Transverse colon (tissue), 4 donors: ENCODE measurements at regions of chr3 and their contacts with region 1.

Region 1: DNA sequence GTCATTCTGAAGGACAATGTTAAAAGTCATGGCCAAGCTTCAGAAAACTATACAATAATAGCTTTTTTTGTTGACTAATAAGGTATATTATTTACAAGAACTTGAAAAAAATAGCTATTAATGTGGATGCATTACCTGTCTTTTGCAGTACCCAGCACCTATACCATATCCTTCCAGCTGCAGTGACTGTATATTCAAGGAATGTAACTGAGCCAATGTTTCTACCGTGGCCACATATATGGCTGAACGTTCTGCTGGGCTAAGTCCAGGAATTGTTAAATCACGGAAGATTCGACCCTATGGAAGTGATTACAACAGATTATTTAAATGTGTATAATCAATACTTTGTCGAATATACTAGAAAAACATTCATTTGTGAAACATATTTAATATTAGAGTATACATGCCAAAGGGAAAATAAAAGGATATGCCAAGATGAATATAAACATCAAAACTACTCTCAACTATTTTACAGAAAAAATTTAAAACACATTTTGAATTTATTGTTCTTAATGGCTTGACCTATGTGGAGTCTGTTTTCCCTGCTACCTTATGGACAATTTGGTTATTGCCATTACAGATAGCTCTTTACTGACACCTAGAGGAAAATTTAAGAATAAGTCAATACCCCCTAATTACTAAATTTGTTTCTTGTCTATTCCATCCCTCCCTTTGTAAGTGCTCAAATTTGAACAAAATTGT is 17.6 kb downstream of the ACAD11 start:
- DNase-seq: no peak
- H3K4me3 ChIP-seq: no peak overlapping the region
- H3K27ac ChIP-seq: no peak overlapping the region
- H3K4me1 ChIP-seq: no peaks in the 10 kb centered on the region
- H3K27me3 ChIP-seq: no peaks in the 10 kb centered on the region
- CTCF ChIP-seq: peak; percentile 74 to 89 (median 77)
- EP300 ChIP-seq: no peak
- POLR2A ChIP-seq: no peak

Region 2: GRCh38 chr3:132352541-132353143 is 289.3 kb before region 1 on chr3:
- in situ Hi-C with region 1: loop called in 2 of 4 experiments (anchors 25 kb)
- intact Hi-C with region 1: no loop called
- DNase-seq: peak; percentile 70
- H3K4me3 ChIP-seq: no peak overlapping the region
- H3K27ac ChIP-seq: no peak overlapping the region
- H3K4me1 ChIP-seq: no peaks in the 10 kb centered on the region
- H3K27me3 ChIP-seq: no peaks in the 10 kb centered on the region
- CTCF ChIP-seq: peak; percentile 83 to 93 (median 87)
- EP300 ChIP-seq: no peak
- POLR2A ChIP-seq: no peak

Region 3: GRCh38 chr3:132535575-132536441 is 106.2 kb before region 1 on chr3:
- in situ Hi-C with region 1: loop called (anchors 5 to 10 kb)
- intact Hi-C with region 1: loop called (anchors 5 kb)
- DNase-seq: peak; percentile 52
- H3K4me3 ChIP-seq: no peak overlapping the region
- H3K27ac ChIP-seq: no peak overlapping the region
- H3K4me1 ChIP-seq: no peaks in the 10 kb centered on the region
- H3K27me3 ChIP-seq: no peaks in the 10 kb centered on the region
- CTCF ChIP-seq: peak; percentile 56 to 74 (median 64)
- EP300 ChIP-seq: no peak
- POLR2A ChIP-seq: no peak

Region 4: DNA sequence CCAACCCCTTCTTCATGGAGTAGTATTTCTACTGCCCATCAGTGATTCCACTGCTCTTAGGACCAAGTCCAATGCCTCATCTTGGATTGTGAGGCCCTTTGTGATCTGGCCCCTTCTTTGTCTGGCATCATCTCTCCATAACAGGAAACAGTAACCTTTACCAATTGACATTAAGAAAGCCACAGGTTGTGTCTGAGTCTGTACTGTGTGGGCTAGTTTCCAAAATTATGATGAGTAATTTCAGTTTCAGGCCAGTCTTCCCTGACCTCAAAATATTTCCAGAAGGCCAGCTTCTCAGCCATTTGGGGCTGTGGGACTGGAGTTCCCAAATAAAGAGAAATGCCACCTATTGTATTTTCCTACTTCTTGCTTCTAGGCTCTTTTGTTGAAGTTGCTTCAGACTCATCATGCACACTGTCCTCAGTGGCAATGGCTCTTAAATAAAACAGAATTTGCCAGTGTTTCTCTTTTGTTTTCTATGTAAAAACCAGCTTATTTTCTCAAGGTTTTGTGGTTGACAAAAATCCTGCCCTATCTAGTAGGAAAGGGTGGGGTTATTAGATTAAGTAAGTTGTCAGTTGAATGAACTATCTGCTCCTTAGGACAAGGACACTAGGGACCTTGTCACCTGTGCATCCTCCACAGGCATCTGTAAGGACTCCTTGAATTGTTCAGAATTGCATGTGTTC is 92.0 kb before region 1 on chr3:
- in situ Hi-C with region 1: loop called in 1 of 4 experiments (anchors 10 kb)
- intact Hi-C with region 1: no loop called
- DNase-seq: no peak
- H3K4me3 ChIP-seq: no peak overlapping the region
- H3K27ac ChIP-seq: no peak overlapping the region
- H3K4me1 ChIP-seq: peaks cover 0 to 7% (median 0%) of the 10 kb centered on the region in 4 donors
- H3K27me3 ChIP-seq: no peaks in the 10 kb centered on the region
- CTCF ChIP-seq: no peak
- EP300 ChIP-seq: no peak
- POLR2A ChIP-seq: no peak